Calu3 (cell line): ENCODE measurements at regions of chr11 and their contacts with region 1.

Region 1: DNA sequence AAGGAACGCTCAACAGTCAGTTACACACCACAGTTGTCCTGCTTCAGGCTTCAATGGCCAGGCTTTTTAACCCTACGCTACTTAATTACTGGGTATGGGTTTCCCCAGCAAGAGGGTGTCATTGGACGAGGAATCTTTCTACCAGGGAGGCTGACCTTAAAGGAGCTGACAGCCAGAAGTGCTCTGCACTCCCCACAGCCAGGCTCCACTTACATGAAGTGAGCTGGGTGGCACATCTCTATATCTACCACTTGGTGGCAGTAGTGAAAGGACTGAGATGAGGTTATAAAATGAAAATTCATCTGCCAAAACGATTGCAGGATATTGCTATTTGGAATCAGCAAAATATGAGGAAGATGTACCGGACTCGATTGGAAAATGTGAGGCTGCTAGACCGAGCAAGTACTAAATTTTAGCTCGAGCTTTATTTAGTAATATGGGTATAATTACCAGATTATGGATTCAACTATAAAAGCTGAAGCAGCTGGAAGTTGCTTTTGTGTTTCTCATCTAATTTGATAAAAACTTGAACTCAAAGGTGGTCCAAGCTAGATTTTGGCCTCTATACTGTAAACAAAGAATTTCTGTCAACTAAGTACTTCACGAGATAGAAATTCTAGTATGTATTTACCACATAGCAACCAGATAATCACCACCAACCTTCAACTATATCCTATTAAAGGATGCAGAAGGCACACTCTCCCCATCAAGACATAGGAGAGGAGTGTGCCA is 53.9 kb upstream of the CEP126 start:
- DNase-seq: peak; percentile 30
- H3K4me3 Mint-ChIP-seq: no peak overlapping the region
- H3K27ac Mint-ChIP-seq: no peak overlapping the region
- H3K4me1 Mint-ChIP-seq: peaks cover 15% of the 10 kb centered on the region
- H3K27me3 Mint-ChIP-seq: no peaks in the 10 kb centered on the region
- CTCF ChIP-seq: peak; percentile 30

Region 2: GRCh38 chr11:101835506-101836063 is 25.3 kb before region 1 on chr11:
- CTCF ChIA-PET with region 1: no interaction called
- intact Hi-C with region 1: no loop called
- DNase-seq: no peak
- H3K4me3 Mint-ChIP-seq: no peak overlapping the region
- H3K27ac Mint-ChIP-seq: no peak overlapping the region
- H3K4me1 Mint-ChIP-seq: no peaks in the 10 kb centered on the region
- H3K27me3 Mint-ChIP-seq: no peaks in the 10 kb centered on the region
- CTCF ChIP-seq: no peak

Region 3: GRCh38 chr11:101880222-101880621 is 19.4 kb after region 1 on chr11:
- CTCF ChIA-PET with region 1: interaction called, 4 read pairs
- intact Hi-C with region 1: loop called (anchors 1 kb)
- DNase-seq: peak; percentile 28
- H3K4me3 Mint-ChIP-seq: no peak overlapping the region
- H3K27ac Mint-ChIP-seq: no peak overlapping the region
- H3K4me1 Mint-ChIP-seq: peaks cover 14% of the 10 kb centered on the region
- H3K27me3 Mint-ChIP-seq: no peaks in the 10 kb centered on the region
- CTCF ChIP-seq: peak; percentile 23

Region 4: DNA sequence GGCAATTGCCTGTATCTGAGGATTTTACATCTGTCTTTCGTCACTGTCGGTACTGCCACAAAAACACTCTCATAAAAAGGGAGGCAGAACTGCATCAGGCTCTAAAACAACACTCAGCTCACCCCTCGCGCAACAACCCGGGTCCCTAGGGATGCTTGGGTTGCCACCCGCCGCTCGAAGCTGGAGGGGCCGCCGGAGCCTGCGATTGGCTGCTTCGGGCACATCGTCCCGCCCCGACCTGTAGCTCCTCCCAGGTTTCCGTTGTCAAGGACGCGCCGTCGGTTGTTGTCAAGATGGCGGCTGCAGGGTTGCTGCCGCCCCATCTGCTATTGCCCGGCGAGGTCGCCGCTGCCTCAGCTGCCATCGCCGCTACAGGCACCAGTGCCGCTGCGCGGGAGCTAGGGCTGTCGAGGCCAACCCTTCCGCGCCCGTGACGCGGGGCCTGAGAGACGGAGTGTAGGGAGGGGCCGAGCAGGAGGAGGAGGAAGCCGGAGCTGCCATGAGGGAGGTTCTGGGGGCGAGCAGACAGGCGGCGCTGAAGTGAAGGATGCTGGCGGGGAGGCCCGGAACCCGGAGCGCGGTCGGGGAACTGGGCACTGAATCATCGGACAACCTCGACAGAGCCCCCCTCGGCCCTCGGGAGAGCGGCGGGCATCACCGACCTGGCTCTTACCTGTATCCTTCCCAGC is 54.0 kb after region 1 on chr11 and contains the start of gene CEP126:
- CTCF ChIA-PET with region 1: interaction called, 3 read pairs
- intact Hi-C with region 1: loop called (anchors 2 kb)
- DNase-seq: peak; percentile 89
- H3K4me3 Mint-ChIP-seq: peak within 1 kb of the TSS; percentile 100
- H3K27ac Mint-ChIP-seq: peak within 1 kb of the TSS; percentile 96
- H3K4me1 Mint-ChIP-seq: peaks cover 21% of the 10 kb centered on the region
- H3K27me3 Mint-ChIP-seq: no peaks in the 10 kb centered on the region
- CTCF ChIP-seq: no peak
- total RNA-seq, gene CEP126: 3.1 and 3.8 TPM in 2 replicates

Region 5: GRCh38 chr11:102268329-102269193 is 407.7 kb after region 1 on chr11:
- CTCF ChIA-PET with region 1: interaction called, 3 read pairs
- intact Hi-C with region 1: loop called (anchors 10 kb)
- DNase-seq: peak; percentile 90
- H3K4me3 Mint-ChIP-seq: peak overlapping the region; percentile 73
- H3K27ac Mint-ChIP-seq: peak overlapping the region; percentile 87
- H3K4me1 Mint-ChIP-seq: peaks cover 35% of the 10 kb centered on the region
- H3K27me3 Mint-ChIP-seq: no peaks in the 10 kb centered on the region
- CTCF ChIP-seq: no peak